HCT116 (cell line): ENCODE measurements at regions of chr11 and their contacts with region 1.

Region 1: DNA sequence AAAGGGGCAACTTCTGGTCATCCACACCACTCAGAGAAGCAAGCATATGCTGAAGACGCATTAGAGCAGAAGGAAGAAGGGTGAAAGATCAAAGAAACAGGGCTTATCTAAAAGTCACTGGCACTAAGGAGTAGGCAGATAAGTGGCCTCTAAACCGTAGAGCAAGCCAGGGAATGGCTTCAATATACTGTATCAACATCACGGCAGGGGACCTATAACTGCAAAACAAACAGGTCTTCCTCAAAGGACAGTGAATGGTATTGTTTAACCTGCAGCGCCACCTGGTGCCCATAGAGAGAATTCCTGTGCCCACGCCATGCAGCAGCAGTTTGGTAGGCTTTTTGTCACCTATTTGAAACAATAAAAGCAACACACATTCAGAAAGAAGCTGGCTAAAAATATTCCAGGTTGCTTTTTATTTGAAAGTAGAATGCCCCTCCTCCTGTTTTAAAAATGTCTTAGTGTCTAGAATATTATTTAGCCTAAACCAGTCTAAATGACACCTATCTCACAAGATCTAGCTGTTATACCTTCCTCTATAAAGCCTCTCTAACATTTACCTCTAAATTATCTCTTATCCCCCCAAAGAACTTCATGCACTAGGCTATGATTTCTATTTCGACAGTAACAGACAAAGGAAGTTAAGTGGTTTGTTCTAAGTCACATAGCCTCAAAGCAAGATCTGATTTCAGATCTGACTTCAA is 21.8 kb downstream of the SNX19 start:
- DNase-seq: peak; percentile 38
- ATAC-seq: peak; percentile 97
- H3K4me3 ChIP-seq: no peak overlapping the region
- H3K27ac ChIP-seq: no peak overlapping the region
- H3K4me1 ChIP-seq: no peaks in the 10 kb centered on the region
- H3K27me3 ChIP-seq: no peaks in the 10 kb centered on the region
- CTCF ChIP-seq: peak; percentile 64 to 94 (median 82); a peak in 5 of 6 replicates
- POLR2A ChIP-seq: no peak
- RAD21 ChIP-seq: peak; percentile 67

Region 2: GRCh38 chr11:130861902-130862860 is 32.3 kb before region 1 on chr11:
- CTCF ChIA-PET with region 1: interaction called, 6 read pairs
- POLR2A ChIA-PET with region 1: no interaction called
- RAD21 ChIA-PET with region 1: no interaction called
- intact Hi-C with region 1: loop called (anchors 1 kb)
- DNase-seq: peak; percentile 90
- ATAC-seq: peak; percentile 94
- H3K4me3 ChIP-seq: no peak overlapping the region
- H3K27ac ChIP-seq: no peak overlapping the region
- H3K4me1 ChIP-seq: no peaks in the 10 kb centered on the region
- H3K27me3 ChIP-seq: no peaks in the 10 kb centered on the region
- CTCF ChIP-seq: peak; percentile 99 to 100 (median 99)
- POLR2A ChIP-seq: no peak
- RAD21 ChIP-seq: peak; percentile 100

Region 3: GRCh38 chr11:130916238-130916855 is 21.9 kb after region 1 on chr11 and contains the start of gene SNX19:
- CTCF ChIA-PET with region 1: interaction called, 10 read pairs
- POLR2A ChIA-PET with region 1: no interaction called
- RAD21 ChIA-PET with region 1: no interaction called
- intact Hi-C with region 1: no loop called
- DNase-seq: peak; percentile 69
- ATAC-seq: peak; percentile 98
- H3K4me3 ChIP-seq: peak within 1 kb of the TSS; percentile 75 to 89
- H3K27ac ChIP-seq: peak within 1 kb of the TSS; percentile 48; the same call in 1 of the 2 replicates
- H3K4me1 ChIP-seq: peaks cover 5 to 12% of the 10 kb centered on the region in 2 experiments
- H3K27me3 ChIP-seq: no peaks in the 10 kb centered on the region
- CTCF ChIP-seq: peak; percentile 71 to 94 (median 78)
- POLR2A ChIP-seq: no peak
- RAD21 ChIP-seq: peak; percentile 33; the same call in 1 of the 2 replicates
- total RNA-seq, gene SNX19: 25.2 TPM